Endothelial cell of umbilical vein (primary cell): ENCODE measurements at regions of chr10 and their contacts with region 1.

Region 1: GRCh38 chr10:117496616-117497028 is 45.9 kb upstream of the EMX2 start:
- DNase-seq: peak; percentile 85
- H3K4me3 ChIP-seq: no peak overlapping the region
- H3K27ac ChIP-seq: no peak overlapping the region
- H3K4me1 ChIP-seq: no peaks in the 10 kb centered on the region
- H3K27me3 ChIP-seq: peaks cover 13% of the 10 kb centered on the region in 2 experiments
- CTCF ChIP-seq: peak; percentile 93
- POLR2A ChIP-seq: no peak

Region 2: DNA sequence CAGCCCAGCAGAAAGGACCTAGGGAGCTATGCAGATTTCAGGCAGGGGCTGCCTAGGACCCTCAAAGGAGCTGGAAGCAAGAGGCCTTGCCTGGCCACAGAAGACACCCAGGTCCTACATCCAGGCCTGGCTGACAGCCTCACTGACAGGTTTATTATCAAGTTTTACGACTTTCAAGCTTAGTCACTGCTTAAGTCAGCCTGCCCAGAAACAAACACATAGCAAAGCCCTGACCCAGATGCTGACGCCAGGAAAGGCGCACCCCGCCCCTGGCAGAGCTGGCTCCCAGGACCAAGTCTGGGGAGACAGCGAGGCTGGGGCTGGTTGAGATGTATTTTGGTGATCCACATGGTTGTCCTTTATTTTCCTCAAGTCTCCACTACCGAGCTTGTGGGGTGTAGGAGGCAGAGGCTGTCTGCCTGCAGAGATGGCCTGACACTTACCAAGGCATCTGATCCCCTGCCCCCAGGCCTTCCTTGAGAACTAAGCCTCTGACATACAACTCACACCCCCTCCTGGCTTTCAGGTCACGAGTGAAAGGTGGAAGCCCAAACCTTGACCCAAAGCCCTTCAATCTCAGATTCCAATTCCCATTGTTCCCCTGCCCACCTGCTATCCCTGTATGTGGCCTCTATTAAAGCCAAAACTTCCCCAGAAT is 34.7 kb before region 1 on chr10:
- CTCF ChIA-PET with region 1: interaction called, 13 read pairs
- POLR2A ChIA-PET with region 1: no interaction called
- dilution Hi-C with region 1: no loop called
- intact Hi-C with region 1: no loop called
- DNase-seq: peak; percentile 95
- H3K4me3 ChIP-seq: no peak overlapping the region
- H3K27ac ChIP-seq: peak overlapping the region; percentile 89
- H3K4me1 ChIP-seq: peaks cover 38% of the 10 kb centered on the region
- H3K27me3 ChIP-seq: no peaks in the 10 kb centered on the region
- CTCF ChIP-seq: no peak
- POLR2A ChIP-seq: no peak

Region 3: DNA sequence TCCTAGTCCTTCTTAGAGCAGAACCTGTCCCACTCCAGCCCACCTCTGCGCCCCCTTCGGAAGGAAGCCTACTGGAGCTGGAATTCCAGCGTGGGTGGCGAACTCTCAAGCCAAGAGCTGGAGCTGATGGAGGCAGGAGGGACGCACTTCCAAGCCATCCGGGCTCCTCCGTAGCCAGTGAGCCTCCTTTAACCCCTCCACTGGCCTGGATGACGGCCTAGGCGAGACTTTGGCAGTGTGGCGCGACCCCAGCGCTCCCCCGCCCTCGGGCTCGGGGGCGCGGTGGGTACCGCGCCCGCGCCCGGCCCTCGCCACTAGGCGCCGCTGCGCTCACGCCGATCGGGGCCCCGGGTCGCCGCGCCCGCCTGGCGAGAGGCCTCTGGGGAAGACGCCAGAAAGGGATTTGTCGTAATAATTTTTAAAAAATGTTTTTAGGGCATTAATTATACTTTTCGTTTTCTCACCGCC is 40.8 kb after region 1 on chr10:
- CTCF ChIA-PET with region 1: interaction called, 21 read pairs
- POLR2A ChIA-PET with region 1: no interaction called
- dilution Hi-C with region 1: no loop called
- intact Hi-C with region 1: loop called (anchors 2 kb)
- DNase-seq: no peak
- H3K4me3 ChIP-seq: no peak overlapping the region
- H3K27ac ChIP-seq: no peak overlapping the region
- H3K4me1 ChIP-seq: peaks cover 2% of the 10 kb centered on the region
- H3K27me3 ChIP-seq: peaks cover 85 to 95% of the 10 kb centered on the region in 2 experiments
- CTCF ChIP-seq: peak; percentile 57 to 81
- POLR2A ChIP-seq: no peak

Region 4: DNA sequence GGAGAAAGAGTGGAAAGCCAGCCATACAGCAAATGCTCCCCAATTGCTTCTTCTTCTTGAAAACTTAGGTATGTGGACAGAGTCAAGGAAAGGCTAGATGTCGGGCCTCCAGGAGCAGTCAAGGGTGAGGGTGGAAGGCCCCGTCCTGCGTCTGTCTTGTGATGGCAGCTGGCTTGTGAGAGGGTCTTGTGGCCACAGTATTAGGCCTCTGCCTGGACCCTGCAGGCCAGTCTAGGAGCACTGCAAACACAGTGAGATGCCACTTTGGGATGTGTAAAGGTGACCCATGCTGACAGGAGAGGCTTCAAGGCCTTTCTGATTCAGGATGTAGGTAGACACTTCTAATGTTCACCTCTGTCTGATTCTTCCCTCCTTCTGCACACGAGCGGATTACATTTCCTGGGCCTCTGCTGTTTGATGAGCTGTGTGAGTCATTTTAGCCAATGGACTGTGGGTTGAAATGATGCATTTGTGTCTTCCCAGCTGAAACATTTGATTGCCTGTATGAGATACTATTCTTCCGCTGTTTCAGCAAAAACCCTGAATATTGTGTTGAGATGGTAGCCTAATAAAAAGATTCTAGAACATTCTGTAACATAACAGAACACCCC is 181.4 kb after region 1 on chr10:
- CTCF ChIA-PET with region 1: no interaction called
- POLR2A ChIA-PET with region 1: no interaction called
- dilution Hi-C with region 1: no loop called
- intact Hi-C with region 1: no loop called
- DNase-seq: no peak
- H3K4me3 ChIP-seq: no peak overlapping the region
- H3K27ac ChIP-seq: no peak overlapping the region
- H3K4me1 ChIP-seq: no peaks in the 10 kb centered on the region
- H3K27me3 ChIP-seq: no peaks in the 10 kb centered on the region
- CTCF ChIP-seq: no peak
- POLR2A ChIP-seq: no peak

Region 5: DNA sequence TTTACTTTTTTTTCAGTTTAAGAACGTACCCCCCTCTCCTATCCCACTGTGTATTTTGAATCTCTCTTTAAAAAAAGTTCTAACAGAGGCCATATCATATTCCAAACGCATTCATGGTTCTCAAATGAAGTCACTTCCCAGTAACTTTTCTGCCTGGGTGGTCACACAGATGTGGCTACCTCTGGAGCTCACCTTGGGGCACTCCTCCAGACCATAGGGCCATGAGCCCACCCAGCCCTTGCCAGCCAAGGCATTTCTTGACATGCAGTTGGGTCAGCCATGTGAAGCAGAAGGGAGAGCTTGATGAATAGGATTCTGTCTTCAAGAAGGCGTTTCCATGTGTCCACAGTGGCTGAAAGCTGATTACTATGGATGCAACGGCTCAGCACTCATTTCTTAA is 310.8 kb after region 1 on chr10:
- CTCF ChIA-PET with region 1: no interaction called
- POLR2A ChIA-PET with region 1: no interaction called
- dilution Hi-C with region 1: no loop called
- intact Hi-C with region 1: no loop called
- DNase-seq: no peak
- H3K4me3 ChIP-seq: no peak overlapping the region
- H3K27ac ChIP-seq: no peak overlapping the region
- H3K4me1 ChIP-seq: no peaks in the 10 kb centered on the region
- H3K27me3 ChIP-seq: no peaks in the 10 kb centered on the region
- CTCF ChIP-seq: no peak
- POLR2A ChIP-seq: no peak

Region 6: DNA sequence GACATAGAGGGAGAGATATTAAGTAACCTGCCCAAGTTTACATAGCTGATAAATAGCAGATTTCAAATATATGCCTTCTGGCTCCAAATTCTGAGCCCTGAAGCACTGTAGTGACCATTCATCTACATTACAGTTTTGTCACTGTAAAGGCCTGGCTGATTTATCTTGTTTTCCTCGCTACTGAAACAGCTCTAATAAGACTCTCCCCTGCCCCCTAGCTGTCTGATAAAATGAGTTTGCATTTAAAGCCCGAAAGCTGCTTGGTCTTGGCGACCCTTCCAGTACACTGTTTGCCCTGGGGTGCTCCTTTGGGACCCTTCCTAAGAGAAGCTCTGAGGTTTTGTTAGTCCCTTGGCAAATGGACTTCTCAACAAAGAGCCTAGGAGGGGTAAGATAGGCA is 609.8 kb after region 1 on chr10:
- CTCF ChIA-PET with region 1: interaction called, 14 read pairs
- POLR2A ChIA-PET with region 1: no interaction called
- dilution Hi-C with region 1: no loop called
- intact Hi-C with region 1: loop called (anchors 1 kb)
- DNase-seq: peak; percentile 42
- H3K4me3 ChIP-seq: no peak overlapping the region
- H3K27ac ChIP-seq: no peak overlapping the region
- H3K4me1 ChIP-seq: no peaks in the 10 kb centered on the region
- H3K27me3 ChIP-seq: no peaks in the 10 kb centered on the region
- CTCF ChIP-seq: peak in 1 of 2 donors; percentile 28
- POLR2A ChIP-seq: no peak

Region 7: DNA sequence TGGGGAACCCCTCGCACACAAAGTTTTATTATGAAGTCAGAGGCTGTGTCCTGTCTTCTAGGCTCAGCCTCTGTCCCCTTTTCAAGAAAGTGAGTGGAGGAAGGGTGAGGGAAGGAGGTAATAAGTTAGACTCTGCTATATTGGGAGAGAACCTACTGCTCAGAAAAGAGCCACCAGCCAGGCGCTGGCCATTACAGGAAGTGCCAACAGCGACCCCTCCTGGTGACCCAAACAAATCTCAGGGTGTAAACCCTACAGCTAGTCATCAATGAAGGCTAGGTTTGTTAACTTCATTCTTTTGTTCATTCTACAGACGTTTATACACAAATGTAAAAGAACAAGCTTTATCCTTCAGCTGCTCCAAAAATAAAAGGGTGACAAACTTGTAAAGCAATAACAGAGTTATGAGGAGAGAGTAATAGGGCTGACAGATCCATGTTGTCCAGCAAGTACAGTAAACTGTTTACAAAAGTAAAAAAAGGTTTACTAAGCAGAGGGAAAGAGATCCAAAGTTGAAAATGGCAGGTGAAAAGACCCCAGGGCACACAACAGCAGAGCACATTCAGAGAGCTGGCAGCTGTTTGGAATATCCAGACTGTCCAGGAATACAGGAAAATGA is 762.8 kb after region 1 on chr10:
- CTCF ChIA-PET with region 1: interaction called, 13 read pairs
- POLR2A ChIA-PET with region 1: no interaction called
- dilution Hi-C with region 1: no loop called
- intact Hi-C with region 1: no loop called
- DNase-seq: no peak
- H3K4me3 ChIP-seq: no peak overlapping the region
- H3K27ac ChIP-seq: no peak overlapping the region
- H3K4me1 ChIP-seq: no peaks in the 10 kb centered on the region
- H3K27me3 ChIP-seq: peaks cover 7 to 8% of the 10 kb centered on the region in 2 experiments
- CTCF ChIP-seq: peak; percentile 45 to 46
- POLR2A ChIP-seq: no peak

Region 8: GRCh38 chr10:118459726-118460193 is 963.1 kb after region 1 on chr10:
- CTCF ChIA-PET with region 1: interaction called, 122 read pairs
- POLR2A ChIA-PET with region 1: no interaction called
- dilution Hi-C with region 1: no loop called
- intact Hi-C with region 1: loop called (anchors 1 kb)
- DNase-seq: peak; percentile 68
- H3K4me3 ChIP-seq: no peak overlapping the region
- H3K27ac ChIP-seq: no peak overlapping the region
- H3K4me1 ChIP-seq: no peaks in the 10 kb centered on the region
- H3K27me3 ChIP-seq: no peaks in the 10 kb centered on the region
- CTCF ChIP-seq: peak; percentile 67 to 80
- POLR2A ChIP-seq: no peak